H1 (cell line): ENCODE measurements at regions of chr5 and their contacts with region 1.

Region 1: GRCh38 chr5:69083412-69083811 is 10.4 kb upstream of the SLC30A5 start:
- DNase-seq: peak; percentile 31 to 47
- H3K4me3 ChIP-seq: no peak overlapping the region
- H3K27ac ChIP-seq: no peak overlapping the region
- H3K4me1 ChIP-seq: no peaks in the 10 kb centered on the region
- H3K27me3 ChIP-seq: no peaks in the 10 kb centered on the region
- CTCF ChIP-seq: peak in 2 of 3 experiments; percentile 45 to 50; a peak in 2 of 4 replicates
- EP300 ChIP-seq: no peak
- POLR2A ChIP-seq: no peak
- RAD21 ChIP-seq: peak; percentile 56 to 57

Region 2: GRCh38 chr5:69042915-69043658 is 40.3 kb before region 1 on chr5:
- CTCF ChIA-PET with region 1: interaction called, 18 read pairs
- POLR2A ChIA-PET with region 1: interaction called, 3 read pairs
- DNase-seq: peak; percentile 31 to 76
- H3K4me3 ChIP-seq: peak overlapping the region; percentile 7 to 57 (median 40); a peak in 6 of 8 replicates
- H3K27ac ChIP-seq: no peak overlapping the region
- H3K4me1 ChIP-seq: no peaks in the 10 kb centered on the region; a peak in 1 of 7 replicates
- H3K27me3 ChIP-seq: no peaks in the 10 kb centered on the region
- CTCF ChIP-seq: peak in 2 of 3 experiments; percentile 73 to 74; a peak in 3 of 4 replicates
- EP300 ChIP-seq: no peak
- POLR2A ChIP-seq: no peak
- RAD21 ChIP-seq: peak; percentile 88 to 89

Region 3: GRCh38 chr5:69093771-69094482 is 10.5 kb after region 1 on chr5 and contains the start of gene SLC30A5:
- CTCF ChIA-PET with region 1: interaction called, 24 read pairs
- POLR2A ChIA-PET with region 1: interaction called, 6 read pairs
- DNase-seq: peak; percentile 95 to 100
- H3K4me3 ChIP-seq: peak within 1 kb of the TSS; percentile 48 to 80 (median 69)
- H3K27ac ChIP-seq: peak within 1 kb of the TSS; percentile 38; the same call in 1 of the 2 replicates
- H3K4me1 ChIP-seq: no peaks in the 10 kb centered on the region; a peak in 1 of 7 replicates
- H3K27me3 ChIP-seq: no peaks in the 10 kb centered on the region
- CTCF ChIP-seq: peak; percentile 86 to 94 (median 92)
- EP300 ChIP-seq: peak in 1 of 2 experiments; percentile 49; a peak in 1 of 3 replicates
- POLR2A ChIP-seq: peak in 1 of 2 experiments; percentile 92; a peak in 2 of 3 replicates
- RAD21 ChIP-seq: peak; percentile 90
- total RNA-seq, gene SLC30A5: 36.3 and 43.5 TPM in 2 replicates

Region 4: DNA sequence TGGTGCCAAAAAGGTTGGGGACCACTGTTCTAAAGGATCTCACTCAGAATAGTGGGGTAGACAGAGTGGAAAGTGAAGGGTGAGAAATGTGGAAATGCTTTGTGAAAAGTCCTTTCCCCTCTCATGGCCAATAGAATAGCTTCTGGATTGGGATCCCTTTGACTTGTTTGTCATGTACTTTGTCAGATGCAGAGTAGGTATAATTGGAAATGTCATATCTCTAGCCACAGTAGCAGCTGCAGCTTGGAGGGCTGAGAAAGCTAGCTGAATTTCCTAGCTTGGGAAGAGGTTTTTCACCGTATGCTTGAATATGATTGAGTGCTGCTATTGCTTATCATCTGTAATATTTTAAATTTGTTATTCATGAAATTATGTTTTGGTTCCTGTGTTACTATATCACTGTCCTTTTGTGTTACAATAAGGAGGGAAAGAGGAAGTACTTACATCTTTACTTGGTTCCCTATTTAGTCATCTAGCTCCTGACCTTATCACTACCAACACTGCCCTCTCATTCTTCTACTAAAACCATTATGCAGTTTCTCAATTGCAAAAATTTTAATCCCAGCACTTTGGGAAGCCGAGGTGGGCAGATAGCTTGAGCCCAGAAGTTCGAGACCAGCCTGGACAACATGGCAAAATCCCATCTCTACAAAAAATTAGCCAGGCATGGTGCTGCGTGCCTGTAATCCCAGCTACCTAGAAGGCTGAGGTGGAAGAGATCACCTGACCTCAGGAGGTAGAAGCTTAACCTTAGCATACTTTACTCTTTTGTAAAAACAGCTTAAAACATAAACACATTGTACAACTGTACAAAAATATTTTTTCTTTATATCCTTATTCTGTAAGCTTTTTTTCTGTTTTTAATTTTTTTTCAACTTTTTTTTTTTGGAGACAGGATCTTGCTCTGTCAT is 22.8 kb after region 1 on chr5:
- CTCF ChIA-PET with region 1: no interaction called
- POLR2A ChIA-PET with region 1: no interaction called
- DNase-seq: no peak
- H3K4me3 ChIP-seq: no peak overlapping the region
- H3K27ac ChIP-seq: no peak overlapping the region
- H3K4me1 ChIP-seq: no peaks in the 10 kb centered on the region
- H3K27me3 ChIP-seq: no peaks in the 10 kb centered on the region
- CTCF ChIP-seq: no peak
- EP300 ChIP-seq: no peak
- POLR2A ChIP-seq: no peak
- RAD21 ChIP-seq: no peak